ENCODE measurements at regions of chr1 and their contacts with region 1.

Region 1: GRCh38 chr1:65419681-65420589 is 533 bp upstream of the LEPR start:
- DNase-seq: peak; percentile 98
- ATAC-seq: peak; percentile 86
- H3K4me3 ChIP-seq: peak overlapping the region; percentile 86
- H3K27ac ChIP-seq: peak overlapping the region; percentile 2
- H3K4me1 ChIP-seq: peaks cover 54% of the 10 kb centered on the region
- H3K27me3 ChIP-seq: no peaks in the 10 kb centered on the region
- CTCF ChIP-seq: no peak

Region 2: DNA sequence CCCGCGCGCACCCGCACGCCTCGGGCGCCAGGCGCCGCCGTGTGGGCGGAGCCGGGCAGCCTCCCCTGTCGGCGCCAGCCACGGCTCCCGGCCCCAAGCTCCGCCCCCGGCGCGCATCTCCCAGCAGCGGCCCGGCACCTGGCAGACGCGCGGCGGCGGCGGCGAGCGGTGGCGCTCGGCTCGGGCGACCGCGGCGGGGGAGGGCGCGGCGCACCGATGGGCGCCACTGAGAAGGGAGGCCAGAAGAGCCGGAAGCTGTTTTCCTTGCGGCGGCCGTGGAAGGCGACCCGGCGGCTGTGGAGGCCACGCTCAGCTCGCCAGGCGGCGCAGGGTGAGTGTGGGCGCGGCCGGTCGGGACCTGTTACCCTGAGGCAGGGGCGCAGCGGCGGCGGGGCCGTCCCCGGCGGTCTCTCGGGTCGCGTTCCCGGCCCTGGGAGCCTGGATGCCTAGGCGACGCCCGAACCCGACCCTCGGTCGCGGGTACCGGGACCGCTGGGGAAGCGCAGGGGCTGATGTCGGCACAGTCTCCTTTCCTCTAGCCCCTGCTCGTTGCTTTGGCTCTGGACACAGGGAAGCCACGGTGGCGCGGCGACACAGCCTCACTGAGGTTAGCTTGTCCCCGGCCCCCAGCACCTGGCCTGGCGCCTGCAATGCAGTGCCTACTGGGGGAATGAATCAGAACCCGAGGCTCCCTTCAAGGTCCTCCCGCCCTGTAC is 165.5 kb before region 1 on chr1:
- CTCF ChIA-PET with region 1: no interaction called
- POLR2A ChIA-PET with region 1: no interaction called
- intact Hi-C with region 1: loop called (anchors 2 kb)
- DNase-seq: peak; percentile 80
- ATAC-seq: peak; percentile 93
- H3K4me3 ChIP-seq: peak overlapping the region; percentile 86
- H3K27ac ChIP-seq: no peak overlapping the region
- H3K4me1 ChIP-seq: peaks cover 9% of the 10 kb centered on the region; the same call in 1 of the 2 replicates
- H3K27me3 ChIP-seq: no peaks in the 10 kb centered on the region
- CTCF ChIP-seq: no peak

Measured in PC-3 (cell line).